CD4-positive, alpha-beta T cell (primary cell): ENCODE measurements at regions of chr1 and their contacts with region 1.

Region 1: GRCh38 chr1:92362970-92363369 is 64.1 kb downstream of the RPAP2 start:
- DNase-seq: no peak
- ATAC-seq: no peak
- H3K4me3 ChIP-seq: no peak overlapping the region
- H3K4me3 Mint-ChIP-seq: no peak overlapping the region
- H3K27ac ChIP-seq: no peak overlapping the region
- H3K27ac Mint-ChIP-seq: peak overlapping the region; percentile 0
- H3K4me1 ChIP-seq: peaks cover 14% of the 10 kb centered on the region
- H3K4me1 Mint-ChIP-seq: peaks cover 50% of the 10 kb centered on the region
- H3K27me3 ChIP-seq: no peaks in the 10 kb centered on the region
- H3K27me3 Mint-ChIP-seq: no peaks in the 10 kb centered on the region
- CTCF ChIP-seq: no peak

Region 2: GRCh38 chr1:92323473-92324453 is 39.2 kb before region 1 on chr1:
- CTCF ChIA-PET with region 1: no interaction called
- POLR2A ChIA-PET with region 1: interaction called, 3 read pairs
- intact Hi-C with region 1: loop called in 1 of 2 experiments (anchors 5 kb)
- DNase-seq: peak in 1 of 14 experiments; percentile 32
- ATAC-seq: no peak
- H3K4me3 ChIP-seq: no peak overlapping the region
- H3K4me3 Mint-ChIP-seq: peak overlapping the region; percentile 0
- H3K27ac ChIP-seq: peak overlapping the region in 1 of 2 donors; percentile 36
- H3K27ac Mint-ChIP-seq: peak overlapping the region; percentile 38
- H3K4me1 ChIP-seq: peaks cover 8% of the 10 kb centered on the region
- H3K4me1 Mint-ChIP-seq: peaks cover 14% of the 10 kb centered on the region
- H3K27me3 ChIP-seq: no peaks in the 10 kb centered on the region
- H3K27me3 Mint-ChIP-seq: no peaks in the 10 kb centered on the region
- CTCF ChIP-seq: no peak

Region 3: GRCh38 chr1:92346866-92347640 is 15.9 kb before region 1 on chr1:
- CTCF ChIA-PET with region 1: no interaction called
- POLR2A ChIA-PET with region 1: no interaction called
- intact Hi-C with region 1: no loop called
- DNase-seq: no peak
- ATAC-seq: no peak
- H3K4me3 ChIP-seq: no peak overlapping the region
- H3K4me3 Mint-ChIP-seq: no peak overlapping the region
- H3K27ac ChIP-seq: no peak overlapping the region
- H3K27ac Mint-ChIP-seq: no peak overlapping the region
- H3K4me1 ChIP-seq: no peaks in the 10 kb centered on the region
- H3K4me1 Mint-ChIP-seq: peaks cover 6% of the 10 kb centered on the region
- H3K27me3 ChIP-seq: no peaks in the 10 kb centered on the region
- H3K27me3 Mint-ChIP-seq: no peaks in the 10 kb centered on the region
- CTCF ChIP-seq: no peak